A673 (cell line): ENCODE measurements at regions of chr20 and their contacts with region 1.

Region 1: GRCh38 chr20:59613861-59614260 is 9.5 kb downstream of the PHACTR3 start:
- DNase-seq: no peak
- H3K4me3 ChIP-seq: no peak overlapping the region
- H3K27ac ChIP-seq: no peak overlapping the region
- H3K4me1 ChIP-seq: no peaks in the 10 kb centered on the region
- H3K27me3 ChIP-seq: peaks cover 34% of the 10 kb centered on the region
- CTCF ChIP-seq: no peak

Region 2: DNA sequence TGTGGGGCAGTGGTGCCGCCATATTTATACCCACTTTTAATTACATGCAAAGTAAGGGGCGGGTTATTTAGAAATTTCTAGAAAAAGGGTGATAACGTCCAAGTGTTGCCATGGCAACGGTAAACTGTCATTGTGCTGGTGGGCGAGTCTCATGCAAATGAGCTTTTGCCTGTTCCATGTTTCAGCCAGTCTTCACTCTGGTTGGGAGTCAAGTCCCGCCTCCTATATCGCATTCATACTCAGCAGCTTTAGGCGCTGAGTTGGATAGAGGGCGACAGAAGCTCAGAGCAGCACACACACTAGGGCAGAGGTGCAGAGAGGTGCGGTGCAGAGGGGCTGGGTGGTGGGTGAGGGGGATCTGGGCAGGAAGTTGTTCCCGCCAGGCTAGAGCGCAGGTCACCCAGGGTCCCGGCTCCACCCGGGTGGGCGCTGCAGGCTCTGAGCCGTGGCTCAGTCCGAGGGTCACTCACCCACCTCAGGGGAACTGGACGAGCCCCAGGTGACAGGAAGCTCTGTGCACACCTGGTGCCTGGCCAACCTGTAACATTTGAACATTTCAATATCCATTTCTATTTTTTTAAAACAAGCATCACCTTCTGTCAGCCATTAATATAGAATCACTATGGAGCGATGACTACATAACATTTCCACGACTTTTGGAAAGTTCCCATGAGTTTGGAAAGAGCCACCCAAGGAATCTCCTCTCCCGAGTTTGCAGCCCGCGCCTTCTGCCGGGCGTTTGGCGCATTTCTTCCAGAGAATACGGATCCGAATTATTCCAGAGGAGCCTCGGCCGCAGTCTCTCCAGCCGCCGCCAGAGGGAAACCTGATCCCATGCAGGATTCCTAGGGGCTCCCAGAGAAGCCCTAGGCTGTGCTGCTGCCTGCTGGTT is 98.6 kb before region 1 on chr20:
- CTCF ChIA-PET with region 1: no interaction called
- POLR2A ChIA-PET with region 1: no interaction called
- intact Hi-C with region 1: no loop called
- DNase-seq: peak; percentile 86
- H3K4me3 ChIP-seq: no peak overlapping the region
- H3K27ac ChIP-seq: no peak overlapping the region
- H3K4me1 ChIP-seq: no peaks in the 10 kb centered on the region
- H3K27me3 ChIP-seq: peaks cover 51% of the 10 kb centered on the region
- CTCF ChIP-seq: peak; percentile 90

Region 3: GRCh38 chr20:59571551-59572314 is 42.1 kb before region 1 on chr20:
- CTCF ChIA-PET with region 1: no interaction called
- POLR2A ChIA-PET with region 1: no interaction called
- intact Hi-C with region 1: loop called (anchors 1 kb)
- DNase-seq: peak; percentile 68
- H3K4me3 ChIP-seq: peak overlapping the region; percentile 39
- H3K27ac ChIP-seq: no peak overlapping the region
- H3K4me1 ChIP-seq: peaks cover 8% of the 10 kb centered on the region
- H3K27me3 ChIP-seq: peaks cover 48% of the 10 kb centered on the region
- CTCF ChIP-seq: peak; percentile 95

Region 4: GRCh38 chr20:59985864-59986263 is 372.0 kb after region 1 on chr20:
- CTCF ChIA-PET with region 1: no interaction called
- POLR2A ChIA-PET with region 1: no interaction called
- intact Hi-C with region 1: no loop called
- DNase-seq: peak; percentile 15
- H3K4me3 ChIP-seq: no peak overlapping the region
- H3K27ac ChIP-seq: no peak overlapping the region
- H3K4me1 ChIP-seq: no peaks in the 10 kb centered on the region
- H3K27me3 ChIP-seq: no peaks in the 10 kb centered on the region
- CTCF ChIP-seq: peak; percentile 47